Ascending aorta (tissue), 2 donors: ENCODE measurements at regions of chr2 and their contacts with region 1.

Region 1: DNA sequence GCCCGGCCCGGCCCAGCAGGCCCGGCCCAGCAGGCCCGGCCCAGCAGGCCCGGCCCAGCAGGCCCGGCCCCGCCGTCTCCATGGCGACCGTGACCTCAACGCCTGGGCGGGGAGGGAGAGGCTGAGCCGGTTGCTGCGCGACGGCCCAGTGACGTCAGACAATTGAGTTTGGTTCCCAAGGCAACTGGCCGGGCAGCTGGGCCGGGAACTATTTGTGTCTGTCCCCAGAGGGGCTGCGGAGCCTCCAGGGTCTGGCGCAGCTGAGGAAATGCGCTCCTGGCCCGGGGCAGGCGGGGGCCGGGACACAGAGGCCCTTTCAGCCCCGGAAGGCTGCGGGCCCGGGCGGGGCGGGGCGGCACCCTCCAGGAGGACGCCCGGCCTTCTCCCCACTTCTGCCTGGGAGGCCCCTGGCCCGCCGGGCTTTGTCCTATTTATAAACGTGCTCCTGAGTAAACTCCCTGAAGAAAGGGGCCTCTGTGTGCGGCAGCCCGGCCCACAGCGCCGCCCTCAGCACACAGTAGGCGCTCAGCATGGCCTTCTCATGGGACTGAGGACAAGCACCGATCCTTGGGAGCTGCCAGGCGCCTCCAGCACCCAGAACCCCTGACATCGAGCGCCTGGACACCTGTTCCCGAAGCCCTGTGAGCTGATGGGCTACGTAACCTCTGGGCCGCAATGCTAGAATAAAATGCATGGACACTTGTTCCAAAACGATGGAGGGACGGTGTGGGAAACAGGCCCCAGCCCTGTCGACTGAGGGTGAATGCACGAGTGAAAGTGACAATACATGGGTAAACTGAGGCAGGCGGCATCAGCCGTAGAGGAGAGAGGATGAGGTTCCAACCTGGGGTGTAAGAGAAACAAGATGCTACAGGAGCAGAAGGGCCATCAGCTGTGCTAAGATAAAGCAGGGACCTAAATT is 12.3 kb downstream of the TEX44 start:
- DNase-seq: peak; percentile 97 to 100
- H3K4me3 ChIP-seq: peak overlapping the region; percentile 60 to 65
- H3K27ac ChIP-seq: peak overlapping the region; percentile 96 to 98
- H3K4me1 ChIP-seq: peaks cover 7 to 44% of the 10 kb centered on the region in 2 donors
- H3K27me3 ChIP-seq: no peaks in the 10 kb centered on the region
- CTCF ChIP-seq: peak in 1 of 3 experiments; percentile 11

Region 2: GRCh38 chr2:231056453-231057424 is 548.2 kb before region 1 on chr2 and contains the start of gene PSMD1:
- intact Hi-C with region 1: loop called (anchors 5 kb)
- DNase-seq: peak; percentile 55 to 95
- H3K4me3 ChIP-seq: peak within 1 kb of the TSS; percentile 86 to 89
- H3K27ac ChIP-seq: peak within 1 kb of the TSS; percentile 86 to 95
- H3K4me1 ChIP-seq: peaks cover 6 to 19% of the 10 kb centered on the region in 2 donors
- H3K27me3 ChIP-seq: no peaks in the 10 kb centered on the region
- CTCF ChIP-seq: peak; percentile 89 to 93 (median 91)
- total RNA-seq, gene PSMD1: 97.4 TPM

Region 3: GRCh38 chr2:231463698-231464575 is 141.0 kb before region 1 on chr2 and contains the start of gene NCL:
- intact Hi-C with region 1: loop called (anchors 1 kb)
- DNase-seq: peak; percentile 35 to 88
- H3K4me3 ChIP-seq: peak within 1 kb of the TSS; percentile 78 to 79
- H3K27ac ChIP-seq: peak within 1 kb of the TSS; percentile 97 to 98
- H3K4me1 ChIP-seq: peaks cover 6 to 16% of the 10 kb centered on the region in 2 donors
- H3K27me3 ChIP-seq: no peaks in the 10 kb centered on the region
- CTCF ChIP-seq: no peak
- total RNA-seq, gene NCL: 136 TPM

Region 4: GRCh38 chr2:231532218-231533035 is 72.5 kb before region 1 on chr2:
- intact Hi-C with region 1: no loop called
- DNase-seq: no peak
- H3K4me3 ChIP-seq: no peak overlapping the region
- H3K27ac ChIP-seq: no peak overlapping the region
- H3K4me1 ChIP-seq: peaks cover 0 to 4% of the 10 kb centered on the region in 2 donors
- H3K27me3 ChIP-seq: no peaks in the 10 kb centered on the region
- CTCF ChIP-seq: no peak

Region 5: GRCh38 chr2:231545105-231545902 is 59.6 kb before region 1 on chr2:
- intact Hi-C with region 1: no loop called
- DNase-seq: no peak
- H3K4me3 ChIP-seq: no peak overlapping the region
- H3K27ac ChIP-seq: peak overlapping the region in 1 of 2 donors; percentile 1
- H3K4me1 ChIP-seq: no peaks in the 10 kb centered on the region
- H3K27me3 ChIP-seq: no peaks in the 10 kb centered on the region
- CTCF ChIP-seq: no peak

Region 6: GRCh38 chr2:231563378-231563961 is 41.5 kb before region 1 on chr2:
- intact Hi-C with region 1: loop called (anchors 1 kb)
- DNase-seq: no peak
- H3K4me3 ChIP-seq: no peak overlapping the region
- H3K27ac ChIP-seq: no peak overlapping the region
- H3K4me1 ChIP-seq: no peaks in the 10 kb centered on the region
- H3K27me3 ChIP-seq: no peaks in the 10 kb centered on the region
- CTCF ChIP-seq: peak; percentile 43 to 76 (median 63)

Region 7: DNA sequence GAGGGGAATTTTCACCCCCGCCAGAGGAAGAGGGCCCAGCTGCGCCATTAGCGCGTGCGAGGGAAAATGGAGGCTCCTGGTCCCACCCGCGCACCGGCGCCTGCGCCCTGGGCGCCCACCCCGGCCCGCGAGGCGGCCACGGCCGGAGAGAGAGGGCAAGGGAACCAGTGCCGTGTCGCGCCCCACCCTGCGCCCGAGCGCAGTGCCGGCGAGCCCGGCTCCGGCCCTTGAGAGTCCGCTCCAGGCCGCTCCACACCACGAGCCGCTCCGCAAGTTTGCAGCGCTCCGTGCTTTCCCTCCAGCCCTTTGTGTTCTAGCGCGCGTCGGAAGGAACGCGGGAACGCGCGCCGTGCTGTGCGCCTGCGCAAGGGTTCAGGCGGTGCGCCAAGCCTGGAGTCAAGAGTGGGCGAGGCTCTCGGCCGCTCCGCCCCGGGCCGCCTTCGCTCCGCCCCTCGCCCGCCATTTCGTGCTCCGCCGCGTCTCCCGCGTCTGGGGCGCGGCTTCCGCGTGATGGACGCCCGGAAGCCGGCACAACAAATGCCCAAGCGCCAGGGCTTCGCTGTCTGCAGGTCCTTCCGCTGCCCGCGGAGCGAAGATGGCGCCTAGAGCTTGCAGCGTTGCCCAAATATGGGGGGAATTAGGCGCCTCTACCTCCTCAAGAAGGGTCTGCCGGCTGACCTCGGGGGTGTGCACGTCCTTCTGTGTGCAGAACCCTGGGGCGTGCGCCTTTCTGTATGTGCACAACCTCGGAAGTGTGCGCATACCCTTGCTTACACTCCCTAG is 57.3 kb after region 1 on chr2:
- intact Hi-C with region 1: loop called (anchors 2 kb)
- DNase-seq: peak; percentile 76 to 96
- H3K4me3 ChIP-seq: peak overlapping the region; percentile 53 to 63
- H3K27ac ChIP-seq: peak overlapping the region; percentile 99 to 100
- H3K4me1 ChIP-seq: peaks cover 3 to 18% of the 10 kb centered on the region in 2 donors
- H3K27me3 ChIP-seq: no peaks in the 10 kb centered on the region
- CTCF ChIP-seq: peak in 1 of 3 experiments; percentile 10

Region 8: DNA sequence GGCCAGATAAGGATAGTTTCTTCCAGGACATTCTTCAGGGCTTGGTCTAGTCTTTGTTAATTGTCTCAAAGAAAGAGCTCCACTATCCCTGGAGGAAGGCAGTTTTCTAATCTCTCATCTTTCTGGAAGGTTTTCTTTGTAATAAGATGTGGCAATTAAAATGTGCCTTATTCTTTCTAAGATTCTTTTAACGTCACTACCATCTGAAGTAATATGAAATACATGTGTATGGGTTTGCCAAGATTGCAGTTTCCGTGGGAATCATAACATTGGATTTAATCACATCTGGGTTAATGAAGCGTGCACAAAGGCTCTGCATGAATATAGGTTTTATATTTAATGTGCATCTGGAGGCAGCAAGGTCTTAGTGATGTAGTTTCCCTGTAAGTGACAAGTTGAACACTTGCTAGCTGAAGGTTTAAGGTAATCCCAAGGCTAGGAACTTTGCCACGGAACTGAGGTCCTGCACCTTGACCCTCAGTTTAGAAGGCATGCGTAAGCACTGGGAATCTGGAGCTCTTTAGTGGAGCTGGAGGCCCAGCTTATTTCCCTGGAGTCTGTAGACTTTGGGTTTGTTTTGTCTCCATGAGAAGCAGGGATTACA is 382.3 kb after region 1 on chr2:
- intact Hi-C with region 1: no loop called
- DNase-seq: no peak
- H3K4me3 ChIP-seq: no peak overlapping the region
- H3K27ac ChIP-seq: no peak overlapping the region
- H3K4me1 ChIP-seq: no peaks in the 10 kb centered on the region
- H3K27me3 ChIP-seq: no peaks in the 10 kb centered on the region
- CTCF ChIP-seq: no peak

Region 9: GRCh38 chr2:233418761-233419625 is 1814.0 kb after region 1 on chr2:
- intact Hi-C with region 1: loop called (anchors 10 kb)
- DNase-seq: peak; percentile 45 to 95
- H3K4me3 ChIP-seq: peak overlapping the region; percentile 50 to 63
- H3K27ac ChIP-seq: peak overlapping the region; percentile 76 to 95
- H3K4me1 ChIP-seq: peaks cover 17 to 25% of the 10 kb centered on the region in 2 donors
- H3K27me3 ChIP-seq: no peaks in the 10 kb centered on the region
- CTCF ChIP-seq: no peak